PC-3 (cell line): ENCODE measurements at regions of chr10 and their contacts with region 1.

Region 1: GRCh38 chr10:110774069-110775019 is 97.4 kb upstream of the PDCD4 start:
- DNase-seq: peak; percentile 83
- ATAC-seq: peak; percentile 82
- H3K4me3 ChIP-seq: peak overlapping the region; percentile 43
- H3K27ac ChIP-seq: peak overlapping the region; percentile 89
- H3K4me1 ChIP-seq: peaks cover 27% of the 10 kb centered on the region
- H3K27me3 ChIP-seq: no peaks in the 10 kb centered on the region
- CTCF ChIP-seq: no peak

Region 2: GRCh38 chr10:110560012-110560411 is 214.3 kb before region 1 on chr10:
- CTCF ChIA-PET with region 1: interaction called, 14 read pairs
- POLR2A ChIA-PET with region 1: no interaction called
- intact Hi-C with region 1: no loop called
- DNase-seq: no peak
- ATAC-seq: no peak
- H3K4me3 ChIP-seq: no peak overlapping the region
- H3K27ac ChIP-seq: no peak overlapping the region
- H3K4me1 ChIP-seq: no peaks in the 10 kb centered on the region
- H3K27me3 ChIP-seq: no peaks in the 10 kb centered on the region
- CTCF ChIP-seq: no peak

Region 3: DNA sequence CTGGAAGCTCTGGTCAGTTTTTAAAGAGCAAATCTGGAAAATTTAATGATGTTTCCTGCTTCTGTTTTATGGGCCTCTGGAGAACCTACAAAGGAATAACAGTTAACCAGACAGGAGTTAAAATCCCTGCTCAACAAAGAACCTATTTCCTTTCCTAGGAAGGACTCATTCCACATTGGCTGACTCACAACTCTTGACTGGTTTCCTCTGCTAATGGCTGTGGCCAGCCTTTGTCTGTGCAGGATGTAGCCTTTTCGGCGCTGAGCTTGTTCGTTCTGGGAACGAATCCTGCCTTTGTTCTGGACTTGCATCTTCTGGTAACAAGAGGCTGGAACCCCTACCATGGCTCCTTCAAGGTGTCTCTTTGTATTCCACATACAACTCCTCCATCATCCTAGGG is 15.4 kb before region 1 on chr10:
- CTCF ChIA-PET with region 1: no interaction called
- POLR2A ChIA-PET with region 1: interaction called, 5 read pairs
- intact Hi-C with region 1: loop called (anchors 2 kb)
- DNase-seq: peak; percentile 75
- ATAC-seq: peak; percentile 95
- H3K4me3 ChIP-seq: no peak overlapping the region
- H3K27ac ChIP-seq: peak overlapping the region; percentile 9; the same call in 1 of the 2 replicates
- H3K4me1 ChIP-seq: peaks cover 18% of the 10 kb centered on the region
- H3K27me3 ChIP-seq: no peaks in the 10 kb centered on the region
- CTCF ChIP-seq: no peak

Region 4: GRCh38 chr10:110852255-110852896 is 78.0 kb after region 1 on chr10:
- CTCF ChIA-PET with region 1: no interaction called
- POLR2A ChIA-PET with region 1: no interaction called
- intact Hi-C with region 1: loop called (anchors 2 kb)
- DNase-seq: peak; percentile 91
- ATAC-seq: peak; percentile 99
- H3K4me3 ChIP-seq: no peak overlapping the region
- H3K27ac ChIP-seq: peak overlapping the region; percentile 28
- H3K4me1 ChIP-seq: peaks cover 16% of the 10 kb centered on the region
- H3K27me3 ChIP-seq: no peaks in the 10 kb centered on the region
- CTCF ChIP-seq: no peak

Region 5: GRCh38 chr10:110883924-110884323 is 109.6 kb after region 1 on chr10:
- CTCF ChIA-PET with region 1: no interaction called
- POLR2A ChIA-PET with region 1: no interaction called
- intact Hi-C with region 1: loop called (anchors 1 kb)
- DNase-seq: peak; percentile 67
- ATAC-seq: peak; percentile 84
- H3K4me3 ChIP-seq: peak overlapping the region; percentile 62
- H3K27ac ChIP-seq: peak overlapping the region; percentile 80
- H3K4me1 ChIP-seq: peaks cover 38% of the 10 kb centered on the region
- H3K27me3 ChIP-seq: no peaks in the 10 kb centered on the region
- CTCF ChIP-seq: no peak

Region 6: GRCh38 chr10:110918643-110919363 is 144.5 kb after region 1 on chr10 and contains the start of gene BBIP1:
- CTCF ChIA-PET with region 1: no interaction called
- POLR2A ChIA-PET with region 1: no interaction called
- intact Hi-C with region 1: loop called (anchors 2 kb)
- DNase-seq: peak; percentile 98
- ATAC-seq: peak; percentile 83
- H3K4me3 ChIP-seq: peak within 1 kb of the TSS; percentile 83
- H3K27ac ChIP-seq: peak within 1 kb of the TSS; percentile 85
- H3K4me1 ChIP-seq: peaks cover 36% of the 10 kb centered on the region
- H3K27me3 ChIP-seq: no peaks in the 10 kb centered on the region
- CTCF ChIP-seq: no peak
- total RNA-seq, gene BBIP1: 12.0 and 19.6 TPM in 2 replicates